ENCODE measurements at regions of chr10 and their contacts with region 1.

Region 1: GRCh38 chr10:17891441-17891840 is 60.3 kb upstream of the SLC39A12 start:
- DNase-seq: no peak
- ATAC-seq: no peak
- H3K4me3 ChIP-seq: no peak overlapping the region
- H3K27ac ChIP-seq: no peak overlapping the region
- H3K4me1 ChIP-seq: no peaks in the 10 kb centered on the region
- H3K27me3 ChIP-seq: no peaks in the 10 kb centered on the region
- CTCF ChIP-seq: no peak

Region 2: GRCh38 chr10:17474595-17475323 is 416.7 kb before region 1 on chr10:
- CTCF ChIA-PET with region 1: no interaction called
- POLR2A ChIA-PET with region 1: no interaction called
- in situ Hi-C with region 1: no loop called
- intact Hi-C with region 1: no loop called
- DNase-seq: no peak
- ATAC-seq: no peak
- H3K4me3 ChIP-seq: no peak overlapping the region
- H3K27ac ChIP-seq: no peak overlapping the region
- H3K4me1 ChIP-seq: no peaks in the 10 kb centered on the region
- H3K27me3 ChIP-seq: no peaks in the 10 kb centered on the region
- CTCF ChIP-seq: peak; percentile 51

Region 3: GRCh38 chr10:17548770-17549169 is 342.7 kb before region 1 on chr10:
- CTCF ChIA-PET with region 1: no interaction called
- POLR2A ChIA-PET with region 1: no interaction called
- in situ Hi-C with region 1: no loop called
- intact Hi-C with region 1: no loop called
- DNase-seq: no peak
- ATAC-seq: no peak
- H3K4me3 ChIP-seq: no peak overlapping the region
- H3K27ac ChIP-seq: no peak overlapping the region
- H3K4me1 ChIP-seq: no peaks in the 10 kb centered on the region
- H3K27me3 ChIP-seq: no peaks in the 10 kb centered on the region
- CTCF ChIP-seq: no peak

Region 4: GRCh38 chr10:17859492-17860156 is 31.8 kb before region 1 on chr10:
- CTCF ChIA-PET with region 1: no interaction called
- POLR2A ChIA-PET with region 1: no interaction called
- in situ Hi-C with region 1: no loop called
- intact Hi-C with region 1: no loop called
- DNase-seq: no peak
- ATAC-seq: no peak
- H3K4me3 ChIP-seq: no peak overlapping the region
- H3K27ac ChIP-seq: no peak overlapping the region
- H3K4me1 ChIP-seq: no peaks in the 10 kb centered on the region
- H3K27me3 ChIP-seq: no peaks in the 10 kb centered on the region
- CTCF ChIP-seq: no peak

Region 5: GRCh38 chr10:17918187-17918903 is 26.9 kb after region 1 on chr10:
- CTCF ChIA-PET with region 1: interaction called, 12 read pairs
- POLR2A ChIA-PET with region 1: no interaction called
- in situ Hi-C with region 1: no loop called
- intact Hi-C with region 1: no loop called
- DNase-seq: no peak
- ATAC-seq: no peak
- H3K4me3 ChIP-seq: no peak overlapping the region
- H3K27ac ChIP-seq: no peak overlapping the region
- H3K4me1 ChIP-seq: no peaks in the 10 kb centered on the region
- H3K27me3 ChIP-seq: no peaks in the 10 kb centered on the region
- CTCF ChIP-seq: no peak

Region 6: DNA sequence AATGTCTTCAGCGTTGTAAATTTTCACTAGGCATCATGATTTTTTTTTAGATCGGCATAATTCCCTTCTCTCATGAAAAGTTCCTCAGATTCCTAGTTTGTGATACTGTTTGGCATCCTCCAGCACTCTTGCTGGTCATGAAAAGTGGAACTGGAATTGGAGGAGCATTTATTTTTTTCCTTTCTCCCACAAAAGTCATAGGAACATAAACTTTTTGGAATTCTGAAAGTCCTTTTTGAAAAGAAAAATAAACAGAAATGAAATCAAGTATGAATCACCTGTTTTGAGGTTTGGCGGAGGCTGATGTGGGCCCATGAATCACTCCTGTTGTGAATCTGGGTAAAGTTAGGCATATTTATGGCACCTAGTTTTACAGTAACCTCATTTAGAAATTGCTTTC is 266.4 kb after region 1 on chr10:
- CTCF ChIA-PET with region 1: no interaction called
- POLR2A ChIA-PET with region 1: no interaction called
- in situ Hi-C with region 1: no loop called
- intact Hi-C with region 1: no loop called
- DNase-seq: no peak
- ATAC-seq: no peak
- H3K4me3 ChIP-seq: no peak overlapping the region
- H3K27ac ChIP-seq: no peak overlapping the region
- H3K4me1 ChIP-seq: no peaks in the 10 kb centered on the region
- H3K27me3 ChIP-seq: no peaks in the 10 kb centered on the region
- CTCF ChIP-seq: no peak

Measured in Panc1 (cell line).